Posterior vena cava (tissue), 2 donors: ENCODE measurements at regions of chr1 and their contacts with region 1.

Region 1: DNA sequence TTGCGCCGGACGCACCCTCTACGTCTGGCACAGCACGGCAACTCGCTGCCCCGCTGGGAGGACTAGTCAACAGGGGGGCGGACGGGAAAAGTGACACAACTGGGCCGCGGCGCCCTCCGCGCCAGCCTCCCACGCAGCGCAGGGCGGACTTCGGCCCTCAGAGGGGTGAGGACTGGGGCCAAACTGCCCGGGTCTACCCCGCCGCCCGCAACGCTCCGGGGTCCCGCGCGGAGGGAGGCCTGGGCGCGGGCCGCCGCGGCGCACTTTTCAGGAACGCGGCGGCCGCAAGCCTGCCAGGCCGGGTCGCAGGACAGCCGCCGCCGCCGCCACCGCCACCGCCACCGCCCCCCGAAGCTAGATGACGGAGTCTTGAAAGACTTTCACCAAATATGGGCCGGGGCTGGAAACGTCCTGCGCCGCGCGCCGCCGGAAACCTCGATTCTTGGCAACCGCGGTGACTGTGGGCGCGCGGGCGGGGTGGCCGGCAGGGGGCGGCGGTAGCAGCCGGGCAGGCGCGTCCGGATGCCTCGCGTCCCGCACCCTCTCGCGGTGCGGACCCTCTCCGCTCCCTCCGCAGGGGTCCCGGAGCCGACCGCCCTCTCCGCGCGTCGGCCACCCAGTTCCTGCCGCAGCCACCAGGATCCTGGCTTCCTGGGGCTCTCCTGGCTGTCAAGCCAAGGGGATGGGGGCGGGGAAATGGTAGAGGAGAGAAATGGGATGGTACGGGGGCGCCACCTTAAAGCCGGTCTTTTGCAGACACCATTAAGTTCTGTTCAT is 3.7 kb upstream of the CCN1 start:
- DNase-seq: peak; percentile 97

Region 2: GRCh38 chr1:85307987-85308832 is 268.6 kb before region 1 on chr1:
- intact Hi-C with region 1: loop called in 1 of 2 experiments (anchors 5 kb)
- DNase-seq: peak; percentile 96

Region 3: GRCh38 chr1:85464497-85465098 is 112.2 kb before region 1 on chr1:
- intact Hi-C with region 1: loop called in 1 of 2 experiments (anchors 10 kb)
- DNase-seq: peak; percentile 91

Region 4: GRCh38 chr1:85544689-85545215 is 32.1 kb before region 1 on chr1:
- intact Hi-C with region 1: no loop called
- DNase-seq: no peak

Region 5: GRCh38 chr1:85681087-85681486 is 104.3 kb after region 1 on chr1:
- intact Hi-C with region 1: loop called in 1 of 2 experiments (anchors 10 kb)
- DNase-seq: no peak